Psoas muscle (tissue), 8 donors: ENCODE measurements at regions of chr2 and their contacts with region 1.

Region 1: GRCh38 chr2:213151437-213152064 is at the start of gene IKZF2:
- DNase-seq: peak; percentile 89 to 94
- ATAC-seq: peak; percentile 86 to 96 (median 90)
- H3K4me3 ChIP-seq: peak within 1 kb of the TSS; percentile 89
- H3K27ac ChIP-seq: peak within 1 kb of the TSS; percentile 96
- H3K4me1 ChIP-seq: peaks cover 31% of the 10 kb centered on the region
- H3K27me3 ChIP-seq: no peaks in the 10 kb centered on the region
- CTCF ChIP-seq: no peak
- total RNA-seq, gene IKZF2: 3.2 to 11.6 (median 6.5) TPM

Region 2: DNA sequence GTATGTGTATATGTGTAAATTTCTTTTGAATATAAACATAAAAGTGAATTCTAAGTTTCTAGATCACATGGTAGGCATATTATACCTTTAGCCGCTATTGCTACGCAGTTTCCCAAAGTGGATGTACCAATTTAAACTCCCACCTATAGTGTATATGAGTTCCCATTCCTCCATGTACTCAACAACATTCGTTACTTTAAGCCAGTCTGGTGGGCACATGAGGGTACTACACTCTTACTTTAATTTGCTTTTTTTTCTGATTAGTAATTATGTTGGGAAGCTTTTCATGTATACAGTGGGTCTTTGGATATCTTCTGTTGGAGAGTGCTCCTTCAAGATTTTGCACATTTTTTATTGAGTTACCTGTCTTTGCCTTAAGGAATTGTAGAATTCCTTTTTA is 1296.7 kb before region 1 on chr2:
- intact Hi-C with region 1: no loop called
- DNase-seq: no peak
- ATAC-seq: no peak
- H3K4me3 ChIP-seq: no peak overlapping the region
- H3K27ac ChIP-seq: no peak overlapping the region
- H3K4me1 ChIP-seq: no peaks in the 10 kb centered on the region
- H3K27me3 ChIP-seq: no peaks in the 10 kb centered on the region
- CTCF ChIP-seq: no peak

Region 3: DNA sequence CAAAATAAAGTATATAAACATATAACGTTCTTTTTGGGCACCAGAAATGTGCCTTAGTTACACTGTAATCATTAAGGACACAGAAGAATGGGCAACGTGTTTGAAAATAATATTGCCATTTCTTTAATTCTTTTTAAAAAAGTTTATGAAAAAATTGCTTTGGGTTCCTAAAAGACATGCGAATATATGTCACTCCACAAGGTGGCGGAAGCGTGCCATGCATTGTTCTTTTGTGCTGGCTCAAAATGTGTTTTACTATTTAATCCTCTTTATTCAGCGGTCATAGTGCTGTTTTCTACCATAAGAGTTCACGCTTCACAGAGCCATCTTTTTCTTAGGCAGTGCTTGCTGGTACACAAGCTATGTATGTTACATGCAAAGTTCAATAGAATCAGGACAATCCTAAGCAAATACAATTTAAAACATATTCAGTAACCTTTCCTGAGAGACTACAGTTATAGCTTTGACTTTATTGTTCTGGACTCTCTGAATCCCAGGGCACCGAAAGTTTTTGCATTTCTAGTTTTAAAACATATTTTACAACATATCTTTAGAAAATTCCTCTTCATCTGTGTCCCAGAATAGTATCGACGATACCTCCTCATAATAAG is 465.2 kb before region 1 on chr2:
- intact Hi-C with region 1: loop called (anchors 2 to 5 kb)
- DNase-seq: peak; percentile 30 to 51
- ATAC-seq: peak in 1 of 4 donors; percentile 70
- H3K4me3 ChIP-seq: peak overlapping the region; percentile 35
- H3K27ac ChIP-seq: no peak overlapping the region
- H3K4me1 ChIP-seq: no peaks in the 10 kb centered on the region
- H3K27me3 ChIP-seq: no peaks in the 10 kb centered on the region
- CTCF ChIP-seq: peak; percentile 91

Region 4: GRCh38 chr2:212777020-212777491 is 374.5 kb before region 1 on chr2:
- intact Hi-C with region 1: loop called (anchors 2 kb)
- DNase-seq: no peak
- ATAC-seq: peak in 2 of 4 donors; percentile 52 to 60
- H3K4me3 ChIP-seq: peak overlapping the region; percentile 7
- H3K27ac ChIP-seq: no peak overlapping the region
- H3K4me1 ChIP-seq: no peaks in the 10 kb centered on the region
- H3K27me3 ChIP-seq: no peaks in the 10 kb centered on the region
- CTCF ChIP-seq: peak; percentile 75

Region 5: GRCh38 chr2:212864186-212864585 is 287.4 kb before region 1 on chr2:
- intact Hi-C with region 1: loop called in 1 of 2 experiments (anchors 2 kb)
- DNase-seq: no peak
- ATAC-seq: no peak
- H3K4me3 ChIP-seq: no peak overlapping the region
- H3K27ac ChIP-seq: no peak overlapping the region
- H3K4me1 ChIP-seq: no peaks in the 10 kb centered on the region
- H3K27me3 ChIP-seq: no peaks in the 10 kb centered on the region
- CTCF ChIP-seq: no peak

Region 6: DNA sequence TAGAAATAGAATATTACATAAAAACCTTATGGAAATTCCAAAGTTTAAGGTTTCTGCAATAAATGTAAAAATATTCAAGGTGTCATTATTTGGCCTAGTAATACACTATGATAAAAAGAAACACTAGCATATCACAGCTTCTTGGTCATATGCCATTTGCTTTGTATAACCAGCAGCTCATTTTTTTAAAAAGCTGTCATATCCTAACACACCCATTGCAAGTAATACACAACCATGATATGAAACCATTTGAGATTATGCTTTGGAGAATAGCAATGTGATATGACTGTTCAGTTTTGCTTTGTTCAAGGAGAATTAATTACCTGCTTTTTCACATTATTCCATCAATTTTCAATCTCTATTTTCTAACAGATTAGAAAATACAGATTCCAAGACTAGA is 149.2 kb before region 1 on chr2:
- intact Hi-C with region 1: loop called in 1 of 2 experiments (anchors 10 kb)
- DNase-seq: no peak
- ATAC-seq: no peak
- H3K4me3 ChIP-seq: no peak overlapping the region
- H3K27ac ChIP-seq: no peak overlapping the region
- H3K4me1 ChIP-seq: peaks cover 27% of the 10 kb centered on the region
- H3K27me3 ChIP-seq: no peaks in the 10 kb centered on the region
- CTCF ChIP-seq: no peak

Region 7: DNA sequence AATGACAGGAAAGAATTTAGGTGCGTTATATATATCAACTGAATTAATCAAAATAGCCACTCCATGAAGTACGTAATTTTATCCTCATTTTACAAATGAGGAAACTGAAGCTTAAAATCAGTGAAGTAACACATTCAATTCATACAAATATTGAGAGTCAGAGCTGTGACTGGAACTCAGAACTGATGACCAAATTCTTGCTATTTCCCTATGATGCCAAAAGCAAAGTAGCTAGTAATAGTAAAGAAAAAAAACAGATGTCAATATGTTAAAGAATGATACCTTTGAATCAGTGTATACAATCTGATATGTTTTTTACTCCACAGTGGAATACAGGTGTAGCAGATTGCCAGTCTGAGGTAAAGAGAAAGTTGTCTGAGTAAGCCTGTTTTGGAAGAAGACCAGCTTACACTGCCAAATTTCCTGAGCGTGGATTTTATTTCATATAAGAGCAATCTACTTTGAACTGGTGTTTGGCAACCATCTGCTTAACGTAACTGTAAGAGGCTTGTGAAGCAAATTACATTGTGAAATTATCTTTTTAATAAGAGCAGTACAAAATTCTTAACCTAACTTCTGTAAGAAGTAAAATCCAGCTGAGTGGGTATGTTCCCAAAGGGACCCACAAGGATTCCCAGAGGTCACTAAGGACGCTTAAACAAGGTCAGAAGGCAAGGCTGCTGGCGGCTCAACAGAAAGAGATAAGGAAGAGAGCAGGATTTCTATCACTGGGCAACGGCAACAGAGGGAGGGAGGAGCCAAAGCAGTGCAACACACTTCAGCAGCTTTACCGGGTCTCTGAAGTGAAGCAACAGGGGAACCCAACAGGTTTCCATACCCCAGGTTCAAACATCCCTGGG is 85.7 kb before region 1 on chr2:
- intact Hi-C with region 1: loop called in 1 of 2 experiments (anchors 5 kb)
- DNase-seq: no peak
- ATAC-seq: peak in 3 of 4 donors; percentile 41 to 72 (median 67)
- H3K4me3 ChIP-seq: peak overlapping the region; percentile 48
- H3K27ac ChIP-seq: peak overlapping the region; percentile 40
- H3K4me1 ChIP-seq: peaks cover 44% of the 10 kb centered on the region
- H3K27me3 ChIP-seq: no peaks in the 10 kb centered on the region
- CTCF ChIP-seq: no peak

Region 8: GRCh38 chr2:213104092-213104902 is 47.3 kb before region 1 on chr2:
- intact Hi-C with region 1: loop called (anchors 5 kb)
- DNase-seq: no peak
- ATAC-seq: peak; percentile 64 to 71 (median 66)
- H3K4me3 ChIP-seq: peak overlapping the region; percentile 56
- H3K27ac ChIP-seq: peak overlapping the region; percentile 62
- H3K4me1 ChIP-seq: peaks cover 70% of the 10 kb centered on the region
- H3K27me3 ChIP-seq: no peaks in the 10 kb centered on the region
- CTCF ChIP-seq: no peak